IMR-90 (cell line): ENCODE measurements at regions of chr10 and their contacts with region 1.

Region 1: GRCh38 chr10:106310596-106310995 is 853.9 kb downstream of the SORCS1 start:
- DNase-seq: no peak
- ATAC-seq: no peak
- H3K4me3 ChIP-seq: no peak overlapping the region
- H3K27ac ChIP-seq: no peak overlapping the region
- H3K4me1 ChIP-seq: no peaks in the 10 kb centered on the region
- H3K27me3 ChIP-seq: no peaks in the 10 kb centered on the region
- CTCF ChIP-seq: no peak
- POLR2A ChIP-seq: no peak
- RAD21 ChIP-seq: no peak

Region 2: GRCh38 chr10:106284802-106285587 is 25.6 kb before region 1 on chr10:
- CTCF ChIA-PET with region 1: no interaction called
- POLR2A ChIA-PET with region 1: no interaction called
- dilution Hi-C with region 1: no loop called
- in situ Hi-C with region 1: no loop called
- intact Hi-C with region 1: loop called (anchors 1 kb)
- DNase-seq: peak; percentile 8
- ATAC-seq: no peak
- H3K4me3 ChIP-seq: no peak overlapping the region
- H3K27ac ChIP-seq: no peak overlapping the region
- H3K4me1 ChIP-seq: no peaks in the 10 kb centered on the region
- H3K27me3 ChIP-seq: no peaks in the 10 kb centered on the region
- CTCF ChIP-seq: no peak
- POLR2A ChIP-seq: no peak
- RAD21 ChIP-seq: no peak